ENCODE measurements at regions of chr7 and their contacts with region 1.

Region 1: DNA sequence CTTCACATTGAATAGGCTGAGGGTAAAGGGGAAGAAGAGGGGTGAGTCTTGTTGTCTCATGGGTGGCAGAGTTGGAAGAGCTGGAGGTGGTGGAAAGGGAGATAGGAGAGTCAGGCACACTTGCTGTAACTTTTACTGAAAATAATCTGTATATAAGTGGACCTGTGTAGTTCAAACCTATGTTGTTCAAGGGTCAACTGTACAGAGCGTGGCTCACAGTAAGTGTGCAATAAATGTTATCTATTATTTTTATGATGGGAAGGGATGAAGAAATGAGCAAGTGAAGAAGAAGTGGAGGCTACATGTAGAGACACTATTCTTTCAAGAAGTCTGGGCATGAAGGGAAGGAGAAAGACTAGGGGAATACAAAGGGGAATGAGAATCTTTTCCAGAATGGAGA is 71.5 kb upstream of the FAM133B start:
- DNase-seq: no peak
- ATAC-seq: no peak
- H3K4me3 ChIP-seq: no peak overlapping the region
- H3K27ac ChIP-seq: no peak overlapping the region
- H3K4me1 ChIP-seq: no peaks in the 10 kb centered on the region
- H3K27me3 ChIP-seq: no peaks in the 10 kb centered on the region
- CTCF ChIP-seq: no peak
- EP300 ChIP-seq: no peak
- POLR2A ChIP-seq: no peak
- RAD21 ChIP-seq: no peak

Region 2: DNA sequence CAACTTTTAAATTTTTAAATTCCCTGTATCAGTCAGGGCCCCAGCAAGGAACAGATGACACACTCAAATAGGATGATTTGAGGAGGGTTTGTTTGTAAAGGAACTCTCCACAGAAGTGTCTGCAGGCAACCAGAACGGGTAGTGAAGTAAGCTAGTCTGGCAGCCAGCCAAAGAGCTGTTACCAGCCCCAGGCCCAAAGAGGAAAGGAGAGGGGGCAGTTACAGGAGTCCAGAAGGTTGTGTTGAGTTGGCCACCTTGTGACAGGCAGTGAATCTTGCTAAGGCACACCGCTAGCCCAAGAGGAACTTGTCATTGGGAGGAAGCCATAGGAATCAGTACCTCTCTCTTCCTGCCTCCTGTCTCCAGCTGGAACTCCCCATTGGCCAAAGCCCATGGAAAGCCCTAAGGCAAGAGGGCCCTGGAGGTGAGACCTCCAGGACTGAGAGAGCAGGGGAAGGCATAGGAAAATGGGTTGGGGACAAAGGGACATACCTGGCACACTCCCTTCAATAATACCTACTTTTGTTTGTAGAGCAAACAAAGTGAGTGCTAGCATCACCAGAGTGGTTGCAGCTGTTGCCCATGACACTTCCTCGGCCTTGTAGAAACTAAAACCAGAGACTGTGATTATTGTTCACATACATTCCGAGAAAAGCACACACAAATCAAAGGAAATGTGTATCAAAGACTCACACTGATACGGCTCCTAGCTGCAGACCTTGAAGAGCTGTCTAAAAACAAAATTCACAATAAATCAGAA is 239.8 kb before region 1 on chr7:
- CTCF ChIA-PET with region 1: no interaction called
- POLR2A ChIA-PET with region 1: no interaction called
- RAD21 ChIA-PET with region 1: no interaction called
- SMC1A ChIA-PET with region 1: no interaction called
- in situ Hi-C with region 1: no loop called
- intact Hi-C with region 1: no loop called
- DNase-seq: no peak
- ATAC-seq: no peak
- H3K4me3 ChIP-seq: no peak overlapping the region
- H3K27ac ChIP-seq: no peak overlapping the region
- H3K4me1 ChIP-seq: peaks cover 5% of the 10 kb centered on the region; the same call in 1 of the 2 replicates
- H3K27me3 ChIP-seq: no peaks in the 10 kb centered on the region
- CTCF ChIP-seq: no peak
- EP300 ChIP-seq: no peak
- POLR2A ChIP-seq: no peak
- RAD21 ChIP-seq: no peak

Region 3: GRCh38 chr7:92648067-92648466 is 13.6 kb before region 1 on chr7:
- CTCF ChIA-PET with region 1: interaction called, 4 read pairs
- POLR2A ChIA-PET with region 1: interaction called, 5 read pairs
- RAD21 ChIA-PET with region 1: no interaction called
- SMC1A ChIA-PET with region 1: interaction called, 12 read pairs
- in situ Hi-C with region 1: no loop called
- intact Hi-C with region 1: no loop called
- DNase-seq: peak; percentile 74
- ATAC-seq: peak; percentile 72
- H3K4me3 ChIP-seq: no peak overlapping the region
- H3K27ac ChIP-seq: peak overlapping the region; percentile 23; the same call in 1 of the 2 replicates
- H3K4me1 ChIP-seq: peaks cover 23% of the 10 kb centered on the region
- H3K27me3 ChIP-seq: no peaks in the 10 kb centered on the region
- CTCF ChIP-seq: no peak
- EP300 ChIP-seq: peak; percentile 86 to 92
- POLR2A ChIP-seq: no peak
- RAD21 ChIP-seq: no peak

Region 4: GRCh38 chr7:93133005-93133404 is 471.4 kb after region 1 on chr7:
- CTCF ChIA-PET with region 1: no interaction called
- POLR2A ChIA-PET with region 1: no interaction called
- RAD21 ChIA-PET with region 1: no interaction called
- SMC1A ChIA-PET with region 1: no interaction called
- in situ Hi-C with region 1: no loop called
- intact Hi-C with region 1: no loop called
- DNase-seq: no peak
- ATAC-seq: no peak
- H3K4me3 ChIP-seq: no peak overlapping the region
- H3K27ac ChIP-seq: no peak overlapping the region
- H3K4me1 ChIP-seq: no peaks in the 10 kb centered on the region
- H3K27me3 ChIP-seq: no peaks in the 10 kb centered on the region
- CTCF ChIP-seq: no peak
- EP300 ChIP-seq: no peak
- POLR2A ChIP-seq: no peak
- RAD21 ChIP-seq: no peak